ENCODE measurements at regions of chr14 and their contacts with region 1.

Region 1: DNA sequence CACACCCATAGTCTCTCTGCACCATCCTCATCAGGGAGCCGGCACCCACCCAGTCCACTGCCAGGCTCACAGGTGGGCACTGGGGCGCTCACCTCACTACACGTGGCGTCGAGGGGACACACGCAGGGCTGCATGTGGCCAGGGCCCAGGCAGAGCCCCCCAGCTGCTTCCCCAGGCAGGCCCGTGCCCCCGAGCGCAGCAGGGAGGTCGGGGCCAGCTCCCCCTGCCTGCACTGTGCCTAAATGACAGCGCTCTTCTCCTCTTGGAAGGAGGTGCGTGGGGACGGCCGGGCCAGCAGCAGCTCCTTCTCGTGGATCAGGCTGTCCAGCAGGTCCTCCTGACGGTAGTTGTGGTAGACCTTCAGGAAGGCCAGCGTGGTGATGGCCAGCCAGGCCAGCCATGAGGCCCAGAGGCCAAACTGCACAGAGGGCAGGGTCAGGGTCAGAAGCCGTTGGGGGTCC is 11.3 kb downstream of the TMEM179 start:
- DNase-seq: no peak

Region 2: GRCh38 chr14:104563742-104564615 is 29.3 kb before region 1 on chr14:
- in situ Hi-C with region 1: no loop called
- DNase-seq: peak; percentile 65

Region 3: DNA sequence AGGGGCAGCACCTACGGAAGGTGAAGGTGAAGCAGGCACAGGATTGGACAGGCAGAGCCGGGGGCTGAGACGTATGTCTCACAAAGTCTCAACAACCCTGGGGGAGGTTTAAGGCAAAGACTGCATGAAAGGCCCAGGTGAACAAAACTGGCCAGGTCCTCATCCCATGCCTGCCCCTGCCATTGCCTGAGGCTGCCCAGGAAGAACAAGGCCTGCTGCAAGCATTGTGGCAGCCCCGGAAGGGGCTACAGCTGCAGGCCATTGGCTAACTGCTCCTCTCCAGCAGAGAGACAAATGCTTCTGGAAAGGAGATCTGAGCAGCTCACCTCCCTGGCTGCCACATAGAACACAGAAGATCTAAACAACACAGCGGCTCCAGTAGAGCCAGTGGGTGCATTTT is 31.7 kb after region 1 on chr14:
- in situ Hi-C with region 1: loop called (anchors 5 kb)
- DNase-seq: no peak